ENCODE measurements at regions of chr14 and their contacts with region 1.

Region 1: DNA sequence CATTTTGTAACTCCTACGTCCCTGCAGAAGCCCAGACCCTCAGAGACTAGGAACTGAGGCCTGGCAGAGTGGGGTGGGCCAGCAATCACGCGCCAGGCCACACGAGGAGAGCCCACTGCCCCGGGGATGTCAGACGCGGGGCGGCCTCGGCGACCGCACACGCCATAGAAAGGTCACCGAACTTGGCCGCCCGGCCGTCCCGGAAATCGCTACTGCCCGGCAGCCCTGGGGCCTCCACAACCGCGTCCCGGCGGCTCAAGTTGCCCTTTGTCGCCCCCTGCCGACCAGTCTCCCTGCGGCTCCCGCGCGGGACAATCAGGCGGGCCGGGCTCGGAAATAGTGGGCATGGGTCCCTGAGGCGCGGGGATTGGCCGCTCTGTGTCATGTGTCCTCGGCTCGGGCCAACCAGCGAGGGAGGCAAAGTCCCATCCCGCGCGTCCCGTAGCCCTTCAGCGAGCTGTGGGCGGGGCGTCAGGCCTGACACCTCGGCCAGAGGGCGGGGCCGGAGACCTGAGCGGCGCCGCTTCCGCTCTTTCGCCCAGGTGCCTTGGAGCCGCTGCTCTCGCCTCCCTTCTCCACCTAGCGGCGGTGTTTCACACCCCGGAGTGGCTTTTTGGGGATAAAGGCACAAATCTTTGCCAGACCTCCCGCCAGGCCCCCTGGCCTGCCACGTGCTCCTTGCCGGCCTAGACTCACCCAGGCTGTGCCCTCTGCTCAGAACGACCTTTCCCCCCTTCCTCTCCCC is 33.4 kb upstream of the DEGS2 start:
- DNase-seq: peak; percentile 99 to 100 (median 100)
- ATAC-seq: peak; percentile 99
- H3K4me3 ChIP-seq: peak overlapping the region; percentile 60
- H3K4me3 Mint-ChIP-seq: peak overlapping the region; percentile 54
- H3K27ac ChIP-seq: peak overlapping the region; percentile 33 to 84
- H3K27ac Mint-ChIP-seq: peak overlapping the region; percentile 86
- H3K4me1 ChIP-seq: peaks cover 21% of the 10 kb centered on the region
- H3K4me1 Mint-ChIP-seq: peaks cover 9% of the 10 kb centered on the region
- H3K27me3 ChIP-seq: no peaks in the 10 kb centered on the region
- H3K27me3 Mint-ChIP-seq: no peaks in the 10 kb centered on the region
- CTCF ChIP-seq: peak; percentile 93

Region 2: GRCh38 chr14:99982537-99983250 is 210.2 kb before region 1 on chr14:
- CTCF ChIA-PET with region 1: interaction called, 25 read pairs
- POLR2A ChIA-PET with region 1: interaction called, 26 read pairs
- intact Hi-C with region 1: loop called (anchors 1 kb)
- DNase-seq: peak; percentile 33 to 86 (median 60)
- ATAC-seq: peak; percentile 100
- H3K4me3 ChIP-seq: no peak overlapping the region
- H3K4me3 Mint-ChIP-seq: no peak overlapping the region
- H3K27ac ChIP-seq: no peak overlapping the region
- H3K27ac Mint-ChIP-seq: peak overlapping the region; percentile 34
- H3K4me1 ChIP-seq: peaks cover 3% of the 10 kb centered on the region
- H3K4me1 Mint-ChIP-seq: peaks cover 23% of the 10 kb centered on the region
- H3K27me3 ChIP-seq: no peaks in the 10 kb centered on the region
- H3K27me3 Mint-ChIP-seq: no peaks in the 10 kb centered on the region
- CTCF ChIP-seq: peak; percentile 95

Region 3: GRCh38 chr14:100067971-100068959 is 124.6 kb before region 1 on chr14:
- CTCF ChIA-PET with region 1: interaction called, 19 read pairs
- POLR2A ChIA-PET with region 1: interaction called, 28 read pairs
- intact Hi-C with region 1: loop called in 1 of 2 experiments (anchors 5 kb)
- DNase-seq: peak; percentile 68 to 97 (median 82)
- ATAC-seq: peak; percentile 49
- H3K4me3 ChIP-seq: peak overlapping the region; percentile 77
- H3K4me3 Mint-ChIP-seq: peak overlapping the region; percentile 95
- H3K27ac ChIP-seq: peak overlapping the region; percentile 82 to 96
- H3K27ac Mint-ChIP-seq: peak overlapping the region; percentile 98
- H3K4me1 ChIP-seq: peaks cover 67% of the 10 kb centered on the region
- H3K4me1 Mint-ChIP-seq: peaks cover 85% of the 10 kb centered on the region
- H3K27me3 ChIP-seq: no peaks in the 10 kb centered on the region
- H3K27me3 Mint-ChIP-seq: no peaks in the 10 kb centered on the region
- CTCF ChIP-seq: no peak

Region 4: GRCh38 chr14:100108042-100108825 is 84.6 kb before region 1 on chr14:
- CTCF ChIA-PET with region 1: interaction called, 15 read pairs
- POLR2A ChIA-PET with region 1: interaction called, 5 read pairs
- intact Hi-C with region 1: loop called in 1 of 2 experiments (anchors 1 kb)
- DNase-seq: peak; percentile 80 to 92 (median 86)
- ATAC-seq: peak; percentile 45
- H3K4me3 ChIP-seq: no peak overlapping the region
- H3K4me3 Mint-ChIP-seq: peak overlapping the region; percentile 69
- H3K27ac ChIP-seq: peak overlapping the region; percentile 49 to 85
- H3K27ac Mint-ChIP-seq: peak overlapping the region; percentile 98
- H3K4me1 ChIP-seq: peaks cover 87% of the 10 kb centered on the region
- H3K4me1 Mint-ChIP-seq: peaks cover 80% of the 10 kb centered on the region
- H3K27me3 ChIP-seq: no peaks in the 10 kb centered on the region
- H3K27me3 Mint-ChIP-seq: no peaks in the 10 kb centered on the region
- CTCF ChIP-seq: peak; percentile 93

Region 5: DNA sequence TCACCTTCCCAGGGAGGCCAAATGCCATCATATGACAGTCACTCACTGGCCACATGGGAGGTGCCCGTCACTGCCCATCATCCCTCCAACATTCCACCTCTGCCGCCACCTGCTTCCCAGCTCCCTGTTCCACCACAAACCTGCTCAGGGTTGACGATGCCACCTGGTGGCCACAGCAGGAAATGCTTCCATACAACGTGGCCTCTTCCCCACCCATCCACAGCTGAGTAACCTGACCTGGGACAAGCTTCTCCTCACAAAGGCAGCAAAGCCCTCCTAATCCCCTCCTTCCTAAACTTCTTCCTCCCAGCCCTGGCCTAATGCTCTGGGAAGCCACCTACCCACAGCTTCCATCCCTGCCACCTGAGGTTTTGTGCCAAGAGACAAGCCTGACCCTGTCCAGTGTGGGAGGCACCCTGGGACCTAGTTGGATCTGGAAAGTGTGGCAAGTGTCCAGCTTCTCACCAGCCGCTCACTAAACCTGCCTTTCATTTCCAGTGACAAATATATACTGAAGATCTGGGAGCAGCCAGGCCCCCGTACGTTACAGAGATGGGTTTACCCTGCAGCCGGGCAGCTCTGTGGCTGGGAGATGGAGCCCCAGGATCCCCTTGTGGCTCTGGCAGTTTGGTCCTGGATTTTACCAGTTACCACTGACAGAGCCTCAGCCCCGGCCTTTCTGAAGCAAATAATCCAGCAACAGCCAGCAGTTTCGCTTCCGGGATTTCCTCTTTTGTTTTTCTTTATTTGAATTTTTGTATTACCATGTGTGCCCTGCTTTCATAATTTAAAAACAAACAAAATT is 37.6 kb before region 1 on chr14:
- CTCF ChIA-PET with region 1: interaction called, 10 read pairs
- POLR2A ChIA-PET with region 1: interaction called, 3 read pairs
- intact Hi-C with region 1: no loop called
- DNase-seq: peak in 4 of 14 experiments; percentile 22 to 53 (median 44)
- ATAC-seq: no peak
- H3K4me3 ChIP-seq: no peak overlapping the region
- H3K4me3 Mint-ChIP-seq: no peak overlapping the region
- H3K27ac ChIP-seq: no peak overlapping the region
- H3K27ac Mint-ChIP-seq: no peak overlapping the region
- H3K4me1 ChIP-seq: peaks cover 13% of the 10 kb centered on the region
- H3K4me1 Mint-ChIP-seq: no peaks in the 10 kb centered on the region
- H3K27me3 ChIP-seq: peaks cover 17 to 18% of the 10 kb centered on the region in 2 experiments
- H3K27me3 Mint-ChIP-seq: peaks cover 18% of the 10 kb centered on the region
- CTCF ChIP-seq: peak; percentile 20

Region 6: DNA sequence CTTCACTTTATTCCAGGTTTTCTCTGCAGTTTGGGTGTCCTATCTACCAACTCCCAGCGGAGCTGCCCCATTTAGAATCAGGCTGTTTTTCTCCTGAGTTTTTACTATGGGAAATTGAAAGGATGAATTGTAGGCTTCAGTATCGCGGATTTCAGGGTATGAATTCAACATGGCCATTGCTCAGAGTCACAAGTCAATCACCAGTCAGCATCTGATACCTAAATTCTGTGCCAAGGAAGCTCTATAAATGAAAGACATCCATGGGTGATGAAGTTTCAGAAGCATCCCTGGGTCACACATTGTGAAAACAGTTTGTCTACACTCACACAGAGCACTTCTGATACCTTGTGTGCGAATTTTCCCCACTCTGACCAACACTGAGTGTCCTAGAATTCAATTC is 10.3 kb after region 1 on chr14:
- CTCF ChIA-PET with region 1: no interaction called
- POLR2A ChIA-PET with region 1: no interaction called
- intact Hi-C with region 1: no loop called
- DNase-seq: no peak
- ATAC-seq: no peak
- H3K4me3 ChIP-seq: no peak overlapping the region
- H3K4me3 Mint-ChIP-seq: no peak overlapping the region
- H3K27ac ChIP-seq: no peak overlapping the region
- H3K27ac Mint-ChIP-seq: no peak overlapping the region
- H3K4me1 ChIP-seq: no peaks in the 10 kb centered on the region
- H3K4me1 Mint-ChIP-seq: no peaks in the 10 kb centered on the region
- H3K27me3 ChIP-seq: no peaks in the 10 kb centered on the region
- H3K27me3 Mint-ChIP-seq: no peaks in the 10 kb centered on the region
- CTCF ChIP-seq: no peak

Region 7: DNA sequence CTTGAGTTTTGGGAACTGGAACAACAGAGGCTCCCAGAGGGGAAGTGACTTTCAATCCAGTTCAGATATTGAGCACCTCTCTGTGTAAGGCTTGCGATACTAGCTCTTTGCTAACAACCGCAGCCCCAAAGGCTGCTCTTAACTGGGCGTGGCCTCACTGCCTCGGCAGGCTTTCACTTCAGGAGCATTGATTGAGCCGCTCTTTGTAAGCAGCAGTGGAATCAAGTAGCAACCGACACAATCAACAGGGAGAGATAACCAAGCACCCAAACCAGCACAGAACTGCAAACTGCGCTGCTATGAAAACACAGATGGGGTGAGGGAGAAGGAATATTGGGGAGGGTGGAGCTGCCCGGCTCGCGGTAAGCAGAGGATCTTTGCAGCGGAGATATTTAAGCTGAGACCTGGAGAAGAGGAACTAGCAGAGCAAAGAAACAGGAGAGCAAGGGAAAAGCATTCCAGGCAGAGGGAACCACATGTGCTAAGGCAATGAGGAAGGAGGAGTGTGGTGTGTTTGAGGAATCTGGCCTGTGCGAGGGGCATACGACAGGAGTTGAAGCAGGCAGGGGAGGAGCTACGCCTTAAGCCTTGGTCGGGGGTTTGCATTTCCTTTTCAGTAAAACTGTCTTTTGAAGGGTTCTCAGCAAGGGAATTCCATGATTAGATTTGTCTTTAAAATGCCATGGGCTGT is 28.8 kb after region 1 on chr14:
- CTCF ChIA-PET with region 1: interaction called, 49 read pairs
- POLR2A ChIA-PET with region 1: interaction called, 43 read pairs
- intact Hi-C with region 1: no loop called
- DNase-seq: peak; percentile 52 to 87 (median 68)
- ATAC-seq: peak; percentile 94
- H3K4me3 ChIP-seq: peak overlapping the region; percentile 73
- H3K4me3 Mint-ChIP-seq: no peak overlapping the region
- H3K27ac ChIP-seq: peak overlapping the region; percentile 63 to 64
- H3K27ac Mint-ChIP-seq: no peak overlapping the region
- H3K4me1 ChIP-seq: peaks cover 59% of the 10 kb centered on the region
- H3K4me1 Mint-ChIP-seq: peaks cover 6% of the 10 kb centered on the region
- H3K27me3 ChIP-seq: no peaks in the 10 kb centered on the region
- H3K27me3 Mint-ChIP-seq: no peaks in the 10 kb centered on the region
- CTCF ChIP-seq: no peak

Region 8: GRCh38 chr14:100428727-100429126 is 235.9 kb after region 1 on chr14:
- CTCF ChIA-PET with region 1: no interaction called
- POLR2A ChIA-PET with region 1: no interaction called
- intact Hi-C with region 1: no loop called
- DNase-seq: peak in 1 of 14 experiments; percentile 39
- ATAC-seq: no peak
- H3K4me3 ChIP-seq: no peak overlapping the region
- H3K4me3 Mint-ChIP-seq: no peak overlapping the region
- H3K27ac ChIP-seq: no peak overlapping the region
- H3K27ac Mint-ChIP-seq: no peak overlapping the region
- H3K4me1 ChIP-seq: peaks cover 11% of the 10 kb centered on the region
- H3K4me1 Mint-ChIP-seq: peaks cover 9% of the 10 kb centered on the region
- H3K27me3 ChIP-seq: no peaks in the 10 kb centered on the region
- H3K27me3 Mint-ChIP-seq: no peaks in the 10 kb centered on the region
- CTCF ChIP-seq: no peak